GM12878 (cell line): ENCODE measurements at regions of chr19 and their contacts with region 1.

Region 1: GRCh38 chr19:40216013-40216776 is 2.0 kb downstream of the TTC9B start:
- DNase-seq: no peak
- ATAC-seq: no peak
- H3K4me3 ChIP-seq: no peak overlapping the region
- H3K27ac ChIP-seq: no peak overlapping the region
- H3K4me1 ChIP-seq: no peaks in the 10 kb centered on the region
- H3K27me3 ChIP-seq: peaks cover 0 to 6% of the 10 kb centered on the region in 2 experiments
- CTCF ChIP-seq: no peak
- EP300 ChIP-seq: no peak
- POLR2A ChIP-seq: no peak
- RAD21 ChIP-seq: no peak

Region 2: GRCh38 chr19:39352381-39353255 is 863.6 kb before region 1 on chr19:
- CTCF ChIA-PET with region 1: no interaction called
- POLR2A ChIA-PET with region 1: interaction called, 12 read pairs
- RAD21 ChIA-PET with region 1: no interaction called
- SMC1A ChIA-PET with region 1: no interaction called
- in situ Hi-C with region 1: no loop called
- intact Hi-C with region 1: no loop called
- DNase-seq: no peak
- ATAC-seq: no peak
- H3K4me3 ChIP-seq: no peak overlapping the region
- H3K27ac ChIP-seq: no peak overlapping the region
- H3K4me1 ChIP-seq: peaks cover 12% of the 10 kb centered on the region
- H3K27me3 ChIP-seq: no peaks in the 10 kb centered on the region
- CTCF ChIP-seq: no peak
- EP300 ChIP-seq: no peak
- POLR2A ChIP-seq: no peak
- RAD21 ChIP-seq: no peak